K562 (cell line): ENCODE measurements at regions of chr15 and their contacts with region 1.

Region 1: GRCh38 chr15:91022075-91022835 is at the start of gene VPS33B:
- DNase-seq: peak; percentile 80 to 93 (median 85)
- ATAC-seq: peak; percentile 87
- H3K4me3 ChIP-seq: peak within 1 kb of the TSS; percentile 78
- H3K27ac ChIP-seq: peak within 1 kb of the TSS; percentile 74
- H3K4me1 ChIP-seq: peaks cover 18 to 21% of the 10 kb centered on the region in 2 experiments; a peak in 4 of 5 replicates
- H3K27me3 ChIP-seq: no peaks in the 10 kb centered on the region
- CTCF ChIP-seq: no peak; a peak in 1 of 6 replicates
- EP300 ChIP-seq: no peak
- POLR2A ChIP-seq: peak; percentile 85
- RAD21 ChIP-seq: no peak
- polyA plus RNA-seq, gene VPS33B: 9.8 to 10.7 TPM

Region 2: GRCh38 chr15:90903733-90904536 is 118.3 kb before region 1 on chr15:
- CTCF ChIA-PET with region 1: no interaction called
- POLR2A ChIA-PET with region 1: no interaction called
- in situ Hi-C with region 1: no loop called
- intact Hi-C with region 1: no loop called
- DNase-seq: peak; percentile 38 to 80 (median 60)
- ATAC-seq: peak; percentile 72
- H3K4me3 ChIP-seq: peak overlapping the region; percentile 69
- H3K27ac ChIP-seq: peak overlapping the region; percentile 84
- H3K4me1 ChIP-seq: peaks cover 25 to 69% of the 10 kb centered on the region in 2 experiments; a peak in 4 of 5 replicates
- H3K27me3 ChIP-seq: no peaks in the 10 kb centered on the region
- CTCF ChIP-seq: peak in 2 of 3 experiments; percentile 30 to 48; a peak in 3 of 6 replicates
- EP300 ChIP-seq: no peak
- POLR2A ChIP-seq: no peak
- RAD21 ChIP-seq: no peak

Region 3: GRCh38 chr15:91007266-91007665 is 15.0 kb before region 1 on chr15:
- CTCF ChIA-PET with region 1: no interaction called
- POLR2A ChIA-PET with region 1: interaction called, 21 read pairs
- in situ Hi-C with region 1: no loop called
- intact Hi-C with region 1: no loop called
- DNase-seq: no peak
- ATAC-seq: no peak
- H3K4me3 ChIP-seq: no peak overlapping the region
- H3K27ac ChIP-seq: no peak overlapping the region
- H3K4me1 ChIP-seq: peaks cover 9 to 20% of the 10 kb centered on the region in 2 experiments; a peak in 4 of 5 replicates
- H3K27me3 ChIP-seq: no peaks in the 10 kb centered on the region
- CTCF ChIP-seq: no peak
- EP300 ChIP-seq: no peak
- POLR2A ChIP-seq: no peak
- RAD21 ChIP-seq: no peak